GM10248 (cell line): ENCODE measurements at regions of chr6 and their contacts with region 1.

Region 1: DNA sequence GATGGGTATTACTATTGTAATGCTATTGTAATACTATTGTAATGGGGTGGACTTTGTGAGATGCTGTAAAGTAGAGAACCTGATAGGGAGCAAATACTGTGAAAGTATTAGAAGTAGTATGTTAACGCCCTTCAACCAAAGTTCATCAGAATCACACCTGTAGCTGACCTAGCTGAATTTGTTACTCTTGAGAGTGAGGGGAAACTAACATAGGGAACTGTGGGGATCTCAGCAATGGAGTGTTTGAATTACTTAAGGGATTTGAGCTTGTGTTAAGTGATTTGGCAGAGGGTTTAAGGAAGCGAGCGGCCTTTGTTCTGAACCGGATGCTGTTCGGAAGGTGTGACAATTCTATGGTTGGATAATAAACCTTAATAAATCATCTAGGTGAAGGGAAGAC is 312.6 kb downstream of the ADGRB3 start:
- DNase-seq: no peak
- CTCF ChIP-seq: no peak

Region 2: DNA sequence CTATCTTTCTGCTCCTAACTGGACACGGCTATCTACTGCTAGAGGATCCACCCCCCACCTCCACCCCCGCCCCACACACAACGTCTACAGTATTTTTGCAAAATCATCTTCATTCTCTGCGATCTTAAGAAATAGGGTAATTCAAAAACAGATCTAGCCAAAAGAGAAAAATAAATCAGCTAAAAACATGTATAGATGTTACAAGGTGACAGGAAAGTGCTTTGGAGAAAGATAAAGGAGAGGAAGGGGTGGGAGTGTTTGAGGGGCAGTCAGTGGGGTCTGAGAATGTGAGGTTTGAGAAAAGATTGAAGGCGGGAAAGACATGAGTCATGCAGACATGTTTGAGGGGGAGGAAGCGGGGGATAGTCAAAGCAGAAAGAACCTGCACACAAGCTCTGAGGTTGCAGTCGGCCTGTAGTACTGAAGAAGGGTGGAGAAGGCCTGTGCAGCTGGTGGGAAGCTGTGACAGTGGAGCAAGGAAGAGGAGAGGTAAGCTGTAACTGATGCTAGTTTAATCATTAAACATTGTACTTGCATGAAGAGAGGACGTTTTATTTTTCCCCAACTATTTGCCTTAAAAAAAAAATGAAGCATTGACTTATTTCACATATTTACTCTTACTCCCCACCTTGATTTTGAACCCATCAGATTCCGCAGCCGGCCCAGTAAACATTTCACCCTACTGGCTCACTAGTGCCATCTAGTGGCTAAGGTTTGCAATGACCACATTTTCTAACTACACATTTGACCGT is 20.0 kb after region 1 on chr6:
- CTCF ChIA-PET with region 1: interaction called, 10 read pairs
- POLR2A ChIA-PET with region 1: no interaction called
- DNase-seq: peak; percentile 59
- CTCF ChIP-seq: peak; percentile 91